PC-9 (cell line): ENCODE measurements at regions of chr13 and their contacts with region 1.

Region 1: GRCh38 chr13:97528518-97528917 is 94.5 kb downstream of the RAP2A start:
- DNase-seq: no peak
- H3K4me3 ChIP-seq: no peak overlapping the region
- H3K27ac ChIP-seq: no peak overlapping the region
- H3K4me1 ChIP-seq: no peaks in the 10 kb centered on the region
- H3K27me3 ChIP-seq: no peaks in the 10 kb centered on the region
- CTCF ChIP-seq: no peak

Region 2: GRCh38 chr13:95865080-95865615 is 1663.4 kb before region 1 on chr13:
- CTCF ChIA-PET with region 1: no interaction called
- POLR2A ChIA-PET with region 1: interaction called, 10 read pairs
- intact Hi-C with region 1: no loop called
- DNase-seq: no peak
- H3K4me3 ChIP-seq: no peak overlapping the region
- H3K27ac ChIP-seq: no peak overlapping the region
- H3K4me1 ChIP-seq: no peaks in the 10 kb centered on the region
- H3K27me3 ChIP-seq: no peaks in the 10 kb centered on the region
- CTCF ChIP-seq: no peak